Cardiac septum (tissue), 1 donor: ENCODE measurements at regions of chr13 and their contacts with region 1.

Region 1: DNA sequence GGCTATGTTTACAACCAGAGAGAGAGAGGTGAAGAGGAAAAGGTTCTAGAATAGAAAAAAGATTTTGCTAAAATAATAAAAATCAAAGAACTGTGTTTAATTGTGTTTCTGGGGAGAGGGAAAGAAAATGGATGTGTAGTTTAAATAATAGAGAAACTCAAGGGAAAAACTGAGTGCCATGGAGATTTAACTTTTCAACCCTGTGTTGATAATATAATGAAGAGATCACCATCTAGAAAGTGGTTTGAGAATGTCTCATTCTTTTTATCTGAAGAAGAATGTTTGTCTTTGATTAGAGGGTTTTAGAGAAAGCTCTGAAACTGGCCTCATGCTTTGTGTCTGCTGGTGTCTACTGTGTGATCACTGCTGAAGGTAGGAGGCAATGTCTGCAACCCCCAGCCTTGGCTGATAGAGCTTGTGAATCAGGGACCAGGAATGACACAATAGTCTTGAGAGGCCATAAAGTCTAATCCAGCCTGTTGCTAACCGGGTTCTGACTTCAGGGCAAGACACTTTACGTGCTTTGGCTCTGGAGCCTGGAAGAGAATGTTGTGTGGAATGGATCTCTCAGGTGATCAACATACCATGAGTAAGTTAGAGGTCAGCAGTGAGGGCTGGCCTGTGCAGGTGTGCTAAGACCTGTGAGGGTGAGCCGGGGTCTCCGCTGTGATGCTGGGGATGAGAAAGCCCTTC is 5.4 kb downstream of the COL4A2 start:
- DNase-seq: peak; percentile 59

Region 2: DNA sequence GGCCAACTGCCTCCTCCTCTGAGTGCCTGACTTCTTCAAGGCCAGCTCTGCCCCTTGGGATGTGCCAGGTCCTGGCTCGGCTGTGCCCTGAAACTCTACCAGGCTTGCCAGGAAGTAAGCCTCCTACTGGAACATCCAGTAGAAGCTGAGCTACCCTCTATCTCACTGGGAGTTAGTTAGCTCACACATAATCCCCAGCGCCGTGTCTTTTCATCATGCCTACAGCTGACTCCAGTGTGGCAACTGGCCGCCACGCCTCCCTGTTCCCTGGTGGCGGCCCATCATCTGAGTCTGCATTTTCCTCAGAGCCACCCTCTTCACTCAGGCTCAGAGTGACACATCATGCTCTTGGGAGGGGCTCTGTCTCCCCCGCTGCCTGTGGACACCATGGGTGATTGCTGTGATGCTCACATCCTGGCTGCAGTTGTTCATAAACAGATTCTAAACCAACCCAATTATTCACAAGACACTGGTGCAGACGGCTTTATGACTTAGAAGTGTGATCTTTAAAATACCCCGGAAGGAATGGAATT is 394.2 kb before region 1 on chr13:
- intact Hi-C with region 1: no loop called
- DNase-seq: no peak

Region 3: GRCh38 chr13:110161112-110161882 is 151.2 kb before region 1 on chr13:
- intact Hi-C with region 1: no loop called
- DNase-seq: no peak

Region 4: GRCh38 chr13:110347535-110348308 is 35.2 kb after region 1 on chr13:
- intact Hi-C with region 1: loop called (anchors 5 kb)
- DNase-seq: no peak